Endothelial cell of umbilical vein (primary cell): ENCODE measurements at regions of chr4 and their contacts with region 1.

Region 1: DNA sequence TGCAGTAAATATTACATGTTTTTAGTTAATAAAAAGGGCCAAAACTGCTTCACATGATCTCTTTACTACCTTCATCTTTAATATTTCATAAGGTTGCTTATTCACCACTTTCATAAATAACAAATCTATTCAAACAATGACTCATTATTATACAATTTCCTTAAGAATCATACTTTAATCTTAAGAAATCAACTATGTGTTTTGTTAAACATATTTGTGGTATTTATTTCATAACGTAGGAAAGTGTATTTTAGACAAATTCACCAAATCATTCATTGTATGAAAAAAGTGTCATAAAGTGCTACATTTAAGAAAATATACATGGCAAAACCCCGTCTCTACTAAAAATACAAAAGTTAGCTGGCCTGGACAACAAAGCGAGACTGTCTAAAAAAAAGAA is 150.5 kb upstream of the RXFP1 start:
- DNase-seq: peak; percentile 66
- H3K4me3 ChIP-seq: no peak overlapping the region
- H3K27ac ChIP-seq: peak overlapping the region; percentile 76
- H3K4me1 ChIP-seq: peaks cover 22% of the 10 kb centered on the region
- H3K27me3 ChIP-seq: no peaks in the 10 kb centered on the region
- CTCF ChIP-seq: no peak
- POLR2A ChIP-seq: no peak

Region 2: GRCh38 chr4:157934151-157934550 is 437.0 kb before region 1 on chr4:
- CTCF ChIA-PET with region 1: no interaction called
- POLR2A ChIA-PET with region 1: no interaction called
- dilution Hi-C with region 1: no loop called
- intact Hi-C with region 1: no loop called
- DNase-seq: no peak
- H3K4me3 ChIP-seq: no peak overlapping the region
- H3K27ac ChIP-seq: no peak overlapping the region
- H3K4me1 ChIP-seq: no peaks in the 10 kb centered on the region
- H3K27me3 ChIP-seq: no peaks in the 10 kb centered on the region
- CTCF ChIP-seq: no peak
- POLR2A ChIP-seq: no peak

Region 3: DNA sequence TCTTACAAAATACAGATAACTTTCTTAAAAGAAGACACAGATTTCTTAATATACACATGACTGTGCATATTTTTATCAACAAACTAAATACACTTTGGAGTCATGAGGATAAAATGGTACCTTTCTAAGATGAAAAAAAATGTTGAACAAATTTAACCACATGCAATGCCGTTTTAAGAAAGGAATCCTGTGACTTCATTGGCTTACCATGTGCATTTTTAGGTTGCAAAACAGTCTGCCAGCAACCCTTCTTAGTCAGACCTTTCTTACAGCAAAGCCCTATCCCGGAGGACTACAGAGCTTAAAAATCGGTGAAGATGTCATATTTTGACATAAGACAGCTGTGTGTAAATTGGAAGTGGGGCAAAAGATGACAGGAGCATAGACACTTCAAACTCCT is 250.0 kb before region 1 on chr4:
- CTCF ChIA-PET with region 1: no interaction called
- POLR2A ChIA-PET with region 1: no interaction called
- dilution Hi-C with region 1: no loop called
- intact Hi-C with region 1: no loop called
- DNase-seq: no peak
- H3K4me3 ChIP-seq: no peak overlapping the region
- H3K27ac ChIP-seq: no peak overlapping the region
- H3K4me1 ChIP-seq: no peaks in the 10 kb centered on the region
- H3K27me3 ChIP-seq: no peaks in the 10 kb centered on the region
- CTCF ChIP-seq: no peak
- POLR2A ChIP-seq: no peak

Region 4: GRCh38 chr4:158161551-158162354 is 209.4 kb before region 1 on chr4:
- CTCF ChIA-PET with region 1: no interaction called
- POLR2A ChIA-PET with region 1: no interaction called
- dilution Hi-C with region 1: no loop called
- intact Hi-C with region 1: no loop called
- DNase-seq: peak; percentile 99
- H3K4me3 ChIP-seq: peak overlapping the region in 1 of 3 experiments; percentile 16
- H3K27ac ChIP-seq: peak overlapping the region; percentile 77
- H3K4me1 ChIP-seq: peaks cover 94% of the 10 kb centered on the region
- H3K27me3 ChIP-seq: no peaks in the 10 kb centered on the region
- CTCF ChIP-seq: no peak
- POLR2A ChIP-seq: peak; percentile 49

Region 5: DNA sequence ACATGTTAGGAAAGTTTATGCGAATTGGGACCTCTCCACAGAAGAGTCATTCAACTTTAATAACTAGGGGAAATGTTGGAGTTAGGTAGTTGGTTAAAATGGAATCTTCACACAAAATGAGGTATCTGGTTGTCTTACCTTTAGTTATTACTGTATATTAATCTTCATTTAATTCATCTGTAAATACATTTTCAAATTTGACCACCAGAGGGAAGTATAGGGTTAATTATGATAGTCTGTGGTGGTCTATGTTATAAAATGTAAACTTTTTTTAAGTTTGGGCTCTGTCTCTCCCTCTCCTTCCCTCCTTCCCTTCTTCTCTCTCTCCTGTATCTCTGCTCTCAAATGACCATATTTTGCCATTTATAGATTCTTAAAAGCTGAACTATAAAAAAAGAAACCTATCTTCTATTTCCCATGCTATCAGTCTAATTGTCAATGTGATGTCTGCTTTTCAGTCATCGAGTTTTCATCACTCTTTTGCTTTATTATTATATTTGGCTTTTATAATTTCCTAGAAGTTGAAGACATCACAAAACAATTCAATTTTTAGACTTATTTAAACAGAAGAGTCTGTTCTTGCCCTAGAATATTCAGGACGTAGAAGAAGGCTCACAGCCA is 111.1 kb before region 1 on chr4:
- CTCF ChIA-PET with region 1: no interaction called
- POLR2A ChIA-PET with region 1: no interaction called
- dilution Hi-C with region 1: no loop called
- intact Hi-C with region 1: loop called (anchors 2 kb)
- DNase-seq: peak; percentile 53
- H3K4me3 ChIP-seq: no peak overlapping the region
- H3K27ac ChIP-seq: no peak overlapping the region
- H3K4me1 ChIP-seq: no peaks in the 10 kb centered on the region
- H3K27me3 ChIP-seq: no peaks in the 10 kb centered on the region
- CTCF ChIP-seq: peak in 1 of 2 donors; percentile 7
- POLR2A ChIP-seq: no peak

Region 6: GRCh38 chr4:158314756-158315487 is 56.2 kb before region 1 on chr4:
- CTCF ChIA-PET with region 1: no interaction called
- POLR2A ChIA-PET with region 1: interaction called, 3 read pairs
- dilution Hi-C with region 1: no loop called
- intact Hi-C with region 1: loop called (anchors 1 kb)
- DNase-seq: peak; percentile 84
- H3K4me3 ChIP-seq: no peak overlapping the region
- H3K27ac ChIP-seq: peak overlapping the region; percentile 68
- H3K4me1 ChIP-seq: peaks cover 9% of the 10 kb centered on the region
- H3K27me3 ChIP-seq: no peaks in the 10 kb centered on the region
- CTCF ChIP-seq: no peak
- POLR2A ChIP-seq: no peak

Region 7: GRCh38 chr4:158513256-158513655 is 142.1 kb after region 1 on chr4:
- CTCF ChIA-PET with region 1: no interaction called
- POLR2A ChIA-PET with region 1: no interaction called
- dilution Hi-C with region 1: no loop called
- intact Hi-C with region 1: no loop called
- DNase-seq: no peak
- H3K4me3 ChIP-seq: no peak overlapping the region
- H3K27ac ChIP-seq: no peak overlapping the region
- H3K4me1 ChIP-seq: no peaks in the 10 kb centered on the region
- H3K27me3 ChIP-seq: no peaks in the 10 kb centered on the region
- CTCF ChIP-seq: no peak
- POLR2A ChIP-seq: no peak

Region 8: DNA sequence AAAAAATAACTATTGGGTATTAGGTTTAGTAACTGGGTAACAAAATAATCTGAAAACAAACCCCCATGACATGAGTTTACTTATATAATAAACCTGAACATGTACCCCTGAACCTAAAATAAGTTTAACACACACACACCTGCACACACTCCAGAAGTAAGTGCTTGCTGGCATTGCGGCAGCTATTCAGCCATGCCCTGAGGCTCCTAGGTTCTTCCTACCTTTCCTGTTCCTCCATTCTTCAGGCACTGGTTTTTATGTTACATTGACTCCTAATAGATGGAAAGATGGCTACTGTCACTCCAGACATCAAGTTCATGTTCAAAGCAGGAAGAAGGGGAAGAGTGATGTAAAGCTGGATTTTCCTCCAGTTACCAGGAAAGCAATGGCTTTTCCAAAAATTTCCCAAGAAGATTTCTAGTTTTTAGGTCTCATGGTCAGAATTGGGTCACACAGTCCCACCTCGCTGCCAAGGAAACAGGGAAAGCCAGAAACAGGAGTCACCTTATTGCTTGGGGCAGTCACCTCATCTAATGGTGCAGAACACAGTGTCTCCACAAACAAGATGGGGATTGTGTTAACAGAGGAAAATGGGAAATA is 171.9 kb after region 1 on chr4:
- CTCF ChIA-PET with region 1: no interaction called
- POLR2A ChIA-PET with region 1: no interaction called
- dilution Hi-C with region 1: no loop called
- intact Hi-C with region 1: loop called (anchors 1 kb)
- DNase-seq: no peak
- H3K4me3 ChIP-seq: no peak overlapping the region
- H3K27ac ChIP-seq: peak overlapping the region; percentile 70
- H3K4me1 ChIP-seq: peaks cover 15% of the 10 kb centered on the region
- H3K27me3 ChIP-seq: no peaks in the 10 kb centered on the region
- CTCF ChIP-seq: no peak
- POLR2A ChIP-seq: no peak